ENCODE measurements at regions of chr2 and their contacts with region 1.

Region 1: DNA sequence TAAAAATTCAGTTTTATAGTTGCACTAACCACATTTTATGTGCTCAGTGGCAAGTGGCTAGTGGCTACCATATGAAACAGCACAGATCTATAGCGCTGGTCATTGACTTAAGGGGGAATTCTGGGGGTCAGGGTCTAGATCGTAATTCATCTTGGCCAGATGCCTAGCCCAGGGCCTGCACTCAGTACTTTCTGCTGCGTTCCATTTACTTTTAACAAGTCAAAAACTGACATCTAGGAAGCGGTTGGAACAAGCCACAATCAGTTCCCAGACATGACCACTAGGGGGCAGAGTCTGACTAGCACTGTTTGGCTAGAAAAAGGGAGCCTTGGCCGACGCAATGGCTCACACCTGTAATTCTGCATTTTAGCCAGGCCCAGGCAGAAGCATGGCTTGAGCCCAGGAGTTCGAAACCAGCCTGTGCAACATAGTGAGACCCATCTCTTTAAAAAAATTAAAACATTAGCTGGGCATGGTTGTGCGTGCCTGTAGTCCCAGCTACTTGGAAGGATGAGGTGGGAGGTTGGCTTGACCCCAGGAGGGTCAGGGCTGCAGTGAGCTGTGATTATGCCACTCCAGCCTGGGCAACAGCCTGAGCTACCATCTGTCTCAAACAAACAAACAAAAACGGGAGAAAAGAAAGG is 9.0 kb upstream of the TMBIM1 start:
- DNase-seq: peak; percentile 73 to 81
- H3K4me3 ChIP-seq: no peak overlapping the region
- H3K27ac ChIP-seq: no peak overlapping the region
- H3K4me1 ChIP-seq: peaks cover 34% of the 10 kb centered on the region
- H3K27me3 ChIP-seq: no peaks in the 10 kb centered on the region
- CTCF ChIP-seq: peak; percentile 97

Region 2: DNA sequence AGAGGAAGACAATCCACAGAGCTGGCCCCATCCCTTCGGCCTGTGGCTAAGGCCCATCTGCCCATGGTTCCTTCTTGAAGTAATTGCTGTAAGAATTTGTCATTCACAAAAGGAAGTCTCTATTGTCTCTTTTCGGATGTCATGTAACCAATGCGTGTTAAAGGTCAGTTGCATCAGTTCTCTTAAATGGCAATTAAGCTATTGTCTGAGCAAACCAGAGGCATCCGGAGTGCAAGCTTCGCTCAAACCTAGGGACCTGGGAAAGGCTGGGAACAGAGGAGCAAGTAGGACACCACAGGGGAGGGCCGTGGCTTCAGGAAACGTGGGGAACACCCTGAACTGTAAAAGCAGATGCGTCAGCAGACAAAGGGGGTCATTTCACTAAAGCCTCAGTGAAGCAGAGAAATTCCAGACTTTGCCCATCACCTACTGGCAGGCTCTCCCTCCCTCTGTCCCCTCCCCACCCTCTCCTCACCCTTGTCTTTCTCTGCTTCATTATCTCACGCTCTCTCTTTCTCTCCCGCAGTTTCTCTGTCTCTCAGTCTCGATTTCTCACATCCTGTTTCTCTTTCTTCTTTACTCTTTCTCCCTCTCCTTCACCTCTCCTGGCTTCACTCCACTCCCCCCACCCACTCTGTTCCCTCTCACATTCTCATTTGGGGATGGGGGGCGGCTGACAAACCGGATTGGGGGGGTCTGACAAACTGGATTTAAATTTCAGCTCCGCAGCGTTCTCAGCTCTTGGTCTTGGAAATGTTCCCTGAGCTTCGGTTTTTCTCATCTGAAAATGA is 1236.9 kb before region 1 on chr2:
- CTCF ChIA-PET with region 1: no interaction called
- POLR2A ChIA-PET with region 1: no interaction called
- intact Hi-C with region 1: no loop called
- DNase-seq: no peak
- H3K4me3 ChIP-seq: no peak overlapping the region
- H3K27ac ChIP-seq: no peak overlapping the region
- H3K4me1 ChIP-seq: peaks cover 9% of the 10 kb centered on the region; the same call in 1 of the 2 replicates
- H3K27me3 ChIP-seq: no peaks in the 10 kb centered on the region
- CTCF ChIP-seq: no peak

Region 3: GRCh38 chr2:218229239-218229638 is 72.1 kb before region 1 on chr2:
- CTCF ChIA-PET with region 1: no interaction called
- POLR2A ChIA-PET with region 1: no interaction called
- intact Hi-C with region 1: loop called (anchors 2 kb)
- DNase-seq: peak; percentile 33 to 83
- H3K4me3 ChIP-seq: no peak overlapping the region
- H3K27ac ChIP-seq: peak overlapping the region; percentile 81
- H3K4me1 ChIP-seq: peaks cover 32% of the 10 kb centered on the region
- H3K27me3 ChIP-seq: no peaks in the 10 kb centered on the region
- CTCF ChIP-seq: no peak

Region 4: DNA sequence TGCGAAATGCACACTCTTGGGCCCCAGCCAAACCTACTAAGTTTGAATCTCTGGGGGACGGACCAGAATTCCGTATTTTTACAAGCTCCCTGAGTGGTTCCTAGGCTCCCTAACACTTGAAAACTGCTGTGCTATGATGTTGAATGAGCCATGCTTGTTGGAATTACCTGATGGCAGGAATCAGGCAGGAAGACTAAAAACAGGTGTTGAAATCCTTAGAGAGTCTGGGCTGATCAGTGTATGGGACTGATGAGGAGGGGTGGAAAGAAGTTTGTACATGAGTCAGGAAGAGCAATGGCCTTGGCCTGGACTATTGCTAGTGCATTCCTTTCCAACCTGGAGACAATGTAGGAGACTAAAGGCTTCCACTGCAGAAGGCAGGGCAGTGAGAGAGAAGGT is 15.9 kb after region 1 on chr2:
- CTCF ChIA-PET with region 1: interaction called, 6 read pairs
- POLR2A ChIA-PET with region 1: no interaction called
- intact Hi-C with region 1: loop called (anchors 1 kb)
- DNase-seq: peak in 1 of 2 experiments; percentile 76
- H3K4me3 ChIP-seq: no peak overlapping the region
- H3K27ac ChIP-seq: peak overlapping the region; percentile 95
- H3K4me1 ChIP-seq: peaks cover 65% of the 10 kb centered on the region
- H3K27me3 ChIP-seq: no peaks in the 10 kb centered on the region
- CTCF ChIP-seq: no peak

Region 5: DNA sequence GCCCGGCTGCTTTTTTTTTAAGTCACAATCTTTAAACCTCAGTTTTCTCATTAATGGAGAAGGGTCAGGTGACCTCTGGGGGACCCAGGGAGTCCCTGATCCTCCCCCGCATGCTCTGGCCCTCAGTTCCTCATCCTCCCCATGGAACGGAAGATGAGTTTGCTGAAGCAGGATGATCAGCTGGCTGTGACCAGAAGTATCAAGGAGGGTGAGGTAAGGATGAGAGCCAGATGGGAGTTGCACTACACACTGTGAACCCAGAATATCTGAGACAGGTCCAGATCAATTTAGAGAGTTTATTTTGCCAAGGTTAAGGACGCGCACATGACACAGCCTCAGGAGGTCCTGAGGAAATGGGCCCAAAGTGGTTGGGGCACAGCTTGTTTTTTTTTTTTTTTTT is 59.1 kb after region 1 on chr2:
- CTCF ChIA-PET with region 1: interaction called, 7 read pairs
- POLR2A ChIA-PET with region 1: interaction called, 12 read pairs
- intact Hi-C with region 1: loop called (anchors 1 kb)
- DNase-seq: no peak
- H3K4me3 ChIP-seq: no peak overlapping the region
- H3K27ac ChIP-seq: peak overlapping the region; percentile 82
- H3K4me1 ChIP-seq: peaks cover 36% of the 10 kb centered on the region
- H3K27me3 ChIP-seq: no peaks in the 10 kb centered on the region
- CTCF ChIP-seq: no peak

Region 6: DNA sequence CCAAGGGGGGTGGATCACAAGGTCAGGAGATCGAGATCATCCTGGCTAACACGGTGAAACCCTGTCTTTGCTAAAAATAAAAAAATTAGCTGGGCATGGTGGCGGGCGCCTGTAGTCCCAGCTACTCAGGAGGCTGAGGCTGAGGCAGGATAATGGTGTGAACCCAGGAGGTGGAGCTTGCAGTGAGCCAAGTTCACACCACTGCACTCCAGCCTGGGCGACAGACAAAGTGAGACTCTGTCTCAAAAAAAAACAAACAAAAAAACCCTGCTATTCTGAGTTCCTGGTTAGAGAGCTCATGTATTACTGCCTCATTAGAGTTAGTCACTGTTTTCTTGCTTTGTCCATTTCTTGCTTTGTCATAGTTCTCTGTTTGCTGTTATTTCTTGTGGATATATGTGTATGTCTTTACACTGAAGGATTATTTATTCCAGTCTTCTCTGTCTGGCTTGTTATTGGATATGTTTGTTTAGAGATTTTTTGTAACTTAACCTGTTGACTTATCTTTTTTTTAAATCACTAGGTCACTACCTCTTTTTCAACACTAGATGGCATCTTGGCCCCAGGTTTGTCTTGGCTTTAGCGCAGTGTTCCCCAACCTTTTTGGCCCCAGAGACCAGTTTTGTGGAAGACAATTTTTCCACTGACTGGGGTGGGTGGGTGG is 426.3 kb after region 1 on chr2:
- CTCF ChIA-PET with region 1: no interaction called
- POLR2A ChIA-PET with region 1: no interaction called
- intact Hi-C with region 1: no loop called
- DNase-seq: peak in 1 of 2 experiments; percentile 78
- H3K4me3 ChIP-seq: no peak overlapping the region
- H3K27ac ChIP-seq: peak overlapping the region; percentile 60
- H3K4me1 ChIP-seq: peaks cover 28% of the 10 kb centered on the region
- H3K27me3 ChIP-seq: no peaks in the 10 kb centered on the region
- CTCF ChIP-seq: peak; percentile 70

Region 7: GRCh38 chr2:218898109-218898878 is 597.0 kb after region 1 on chr2:
- CTCF ChIA-PET with region 1: no interaction called
- POLR2A ChIA-PET with region 1: no interaction called
- intact Hi-C with region 1: loop called (anchors 2 kb)
- DNase-seq: peak in 1 of 2 experiments; percentile 71
- H3K4me3 ChIP-seq: no peak overlapping the region
- H3K27ac ChIP-seq: no peak overlapping the region
- H3K4me1 ChIP-seq: peaks cover 49% of the 10 kb centered on the region
- H3K27me3 ChIP-seq: no peaks in the 10 kb centered on the region
- CTCF ChIP-seq: peak; percentile 96